ENCODE measurements at regions of chr12 and their contacts with region 1.

Region 1: GRCh38 chr12:68113644-68114043 is 45.9 kb downstream of the IFNG start:
- DNase-seq: peak in 1 of 2 experiments; percentile 77
- H3K4me3 ChIP-seq: no peak overlapping the region
- H3K27ac ChIP-seq: no peak overlapping the region
- H3K4me1 ChIP-seq: peaks cover 0 to 4% (median 1%) of the 10 kb centered on the region in 4 experiments; a peak in 4 of 7 replicates
- H3K27me3 ChIP-seq: no peaks in the 10 kb centered on the region
- CTCF ChIP-seq: peak; percentile 50 to 72 (median 57)
- EP300 ChIP-seq: no peak
- POLR2A ChIP-seq: no peak
- RAD21 ChIP-seq: peak; percentile 50 to 63

Region 2: DNA sequence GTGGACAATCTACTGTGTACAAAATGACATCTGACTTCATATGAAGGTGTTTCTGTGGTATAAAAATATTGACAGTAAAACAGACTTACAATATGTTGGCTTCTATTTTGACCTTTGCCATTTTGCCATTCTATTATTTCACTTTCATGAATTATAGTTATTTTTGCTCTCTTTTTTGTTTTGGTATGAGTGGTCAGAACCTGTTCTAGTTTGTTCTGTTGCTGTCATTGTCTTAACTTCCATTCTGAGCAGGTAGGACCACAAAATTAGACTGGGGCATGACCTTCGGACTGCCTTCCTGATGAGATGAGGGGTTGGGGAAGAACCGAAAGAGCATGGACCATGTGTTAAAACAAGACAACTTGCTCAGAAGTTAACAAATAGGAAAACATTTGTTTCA is 160.9 kb before region 1 on chr12:
- CTCF ChIA-PET with region 1: no interaction called
- POLR2A ChIA-PET with region 1: no interaction called
- DNase-seq: no peak
- H3K4me3 ChIP-seq: no peak overlapping the region
- H3K27ac ChIP-seq: no peak overlapping the region
- H3K4me1 ChIP-seq: no peaks in the 10 kb centered on the region
- H3K27me3 ChIP-seq: no peaks in the 10 kb centered on the region
- CTCF ChIP-seq: no peak
- EP300 ChIP-seq: no peak
- POLR2A ChIP-seq: no peak
- RAD21 ChIP-seq: no peak

Region 3: DNA sequence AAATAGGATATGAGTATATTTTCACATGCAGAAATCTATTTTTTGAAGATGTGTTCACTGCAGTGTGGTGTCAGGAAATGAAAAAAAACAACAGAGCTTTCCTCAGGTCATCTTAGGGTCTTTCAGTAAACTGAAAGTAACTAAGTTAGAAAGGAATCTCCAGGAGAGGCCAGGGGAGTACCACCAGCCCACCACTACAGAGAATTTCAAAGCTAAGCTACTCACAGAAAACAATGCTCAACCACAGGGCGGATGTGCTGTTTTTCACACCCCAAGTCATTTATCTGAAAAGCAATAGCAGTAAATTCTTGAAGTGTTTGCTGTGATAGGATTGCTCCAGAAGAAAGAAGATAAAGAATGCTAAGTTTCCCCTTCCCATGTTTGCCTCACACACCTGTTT is 33.1 kb before region 1 on chr12:
- CTCF ChIA-PET with region 1: interaction called, 10 read pairs
- POLR2A ChIA-PET with region 1: no interaction called
- DNase-seq: no peak
- H3K4me3 ChIP-seq: peak overlapping the region in 1 of 4 experiments; percentile 15; a peak in 1 of 8 replicates
- H3K27ac ChIP-seq: no peak overlapping the region
- H3K4me1 ChIP-seq: peaks cover 0 to 3% (median under 1%) of the 10 kb centered on the region in 4 experiments; a peak in 4 of 7 replicates
- H3K27me3 ChIP-seq: peaks cover 0 to under 1% (median under 1%) of the 10 kb centered on the region in 4 experiments; a peak in 3 of 7 replicates
- CTCF ChIP-seq: no peak
- EP300 ChIP-seq: no peak
- POLR2A ChIP-seq: no peak
- RAD21 ChIP-seq: peak in 1 of 2 experiments; percentile 12; a peak in 1 of 4 replicates

Region 4: GRCh38 chr12:68097386-68097785 is 16.3 kb before region 1 on chr12:
- CTCF ChIA-PET with region 1: interaction called, 19 read pairs
- POLR2A ChIA-PET with region 1: interaction called, 6 read pairs
- DNase-seq: no peak
- H3K4me3 ChIP-seq: no peak overlapping the region
- H3K27ac ChIP-seq: no peak overlapping the region
- H3K4me1 ChIP-seq: peaks cover 0 to 5% (median 2%) of the 10 kb centered on the region in 4 experiments; a peak in 3 of 7 replicates
- H3K27me3 ChIP-seq: no peaks in the 10 kb centered on the region
- CTCF ChIP-seq: no peak
- EP300 ChIP-seq: no peak
- POLR2A ChIP-seq: no peak
- RAD21 ChIP-seq: no peak

Region 5: DNA sequence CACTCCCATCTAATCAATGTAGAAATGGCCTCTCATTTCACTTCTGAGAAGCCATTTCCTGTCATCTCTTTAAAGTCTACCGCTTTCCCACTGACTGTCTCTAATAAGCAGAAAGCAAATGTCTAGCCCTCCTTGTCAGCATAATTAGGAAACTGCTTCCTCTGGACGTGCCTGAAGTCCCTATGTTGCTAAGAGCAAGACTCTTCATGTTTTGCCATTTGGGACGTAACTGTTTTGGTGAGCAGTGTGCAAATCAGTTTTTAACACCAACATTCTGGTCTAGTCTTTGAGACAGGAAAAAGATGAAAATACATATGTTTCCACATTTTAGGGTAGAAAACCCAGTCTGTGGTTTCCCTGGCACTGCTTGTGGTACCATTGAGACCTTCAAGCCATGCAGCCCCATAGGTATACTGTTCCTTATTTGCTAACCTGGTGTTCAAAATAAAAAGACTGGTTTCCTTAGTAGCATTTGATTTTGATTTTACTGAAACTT is 23.7 kb after region 1 on chr12:
- CTCF ChIA-PET with region 1: interaction called, 17 read pairs
- POLR2A ChIA-PET with region 1: no interaction called
- DNase-seq: no peak
- H3K4me3 ChIP-seq: no peak overlapping the region
- H3K27ac ChIP-seq: no peak overlapping the region
- H3K4me1 ChIP-seq: peaks cover 0 to 7% (median 0%) of the 10 kb centered on the region in 4 experiments; a peak in 5 of 7 replicates
- H3K27me3 ChIP-seq: no peaks in the 10 kb centered on the region
- CTCF ChIP-seq: no peak
- EP300 ChIP-seq: no peak
- POLR2A ChIP-seq: no peak
- RAD21 ChIP-seq: no peak

Region 6: GRCh38 chr12:68521321-68521839 is 407.7 kb after region 1 on chr12:
- CTCF ChIA-PET with region 1: no interaction called
- POLR2A ChIA-PET with region 1: no interaction called
- DNase-seq: no peak
- H3K4me3 ChIP-seq: no peak overlapping the region
- H3K27ac ChIP-seq: no peak overlapping the region
- H3K4me1 ChIP-seq: no peaks in the 10 kb centered on the region
- H3K27me3 ChIP-seq: no peaks in the 10 kb centered on the region
- CTCF ChIP-seq: no peak
- EP300 ChIP-seq: no peak
- POLR2A ChIP-seq: no peak
- RAD21 ChIP-seq: no peak